Psoas muscle (tissue), 8 donors: ENCODE measurements at regions of chr6 and their contacts with region 1.

Region 1: GRCh38 chr6:45714741-45715507 is 300.7 kb downstream of the CLIC5 start:
- DNase-seq: no peak
- ATAC-seq: peak; percentile 84 to 98 (median 90)
- H3K4me3 ChIP-seq: no peak overlapping the region
- H3K27ac ChIP-seq: no peak overlapping the region
- H3K4me1 ChIP-seq: no peaks in the 10 kb centered on the region
- H3K27me3 ChIP-seq: no peaks in the 10 kb centered on the region
- CTCF ChIP-seq: peak; percentile 76

Region 2: DNA sequence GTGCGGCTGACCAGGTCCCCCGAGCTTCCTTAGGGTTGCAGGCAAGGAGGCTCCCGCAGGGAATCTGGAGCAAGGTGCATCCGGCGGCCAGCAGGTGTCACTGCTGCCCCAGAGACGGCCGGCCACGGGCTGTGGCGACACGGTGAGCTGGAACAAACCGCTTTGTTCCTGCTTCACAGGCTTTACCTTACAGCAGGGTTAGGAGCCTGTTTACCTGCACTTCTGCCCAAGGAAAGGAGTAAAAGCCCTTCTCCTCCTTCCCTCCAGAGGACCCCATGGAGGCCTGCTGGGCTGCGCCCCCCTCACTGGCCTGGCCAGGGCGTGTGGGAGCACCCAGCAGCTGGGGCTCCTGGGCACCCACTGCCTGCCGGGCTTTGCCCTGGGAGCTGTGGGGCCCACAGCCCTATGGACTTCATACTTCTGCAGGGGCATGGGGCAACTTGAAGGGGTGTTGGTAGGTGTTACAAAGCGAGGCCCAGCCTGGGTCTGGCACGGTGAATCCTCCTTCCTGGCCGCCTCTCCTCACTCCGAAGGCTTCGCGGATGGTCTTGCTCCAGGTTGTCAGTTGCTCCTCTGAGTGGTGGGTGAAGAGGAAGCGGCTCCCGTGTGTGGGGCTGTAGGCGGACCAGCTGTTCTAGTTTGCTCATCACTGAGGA is 1239.0 kb before region 1 on chr6:
- intact Hi-C with region 1: loop called (anchors 2 to 5 kb)
- DNase-seq: peak; percentile 80 to 87
- ATAC-seq: peak; percentile 80 to 91 (median 88)
- H3K4me3 ChIP-seq: no peak overlapping the region
- H3K27ac ChIP-seq: no peak overlapping the region
- H3K4me1 ChIP-seq: peaks cover 27% of the 10 kb centered on the region
- H3K27me3 ChIP-seq: no peaks in the 10 kb centered on the region
- CTCF ChIP-seq: peak; percentile 95

Region 3: DNA sequence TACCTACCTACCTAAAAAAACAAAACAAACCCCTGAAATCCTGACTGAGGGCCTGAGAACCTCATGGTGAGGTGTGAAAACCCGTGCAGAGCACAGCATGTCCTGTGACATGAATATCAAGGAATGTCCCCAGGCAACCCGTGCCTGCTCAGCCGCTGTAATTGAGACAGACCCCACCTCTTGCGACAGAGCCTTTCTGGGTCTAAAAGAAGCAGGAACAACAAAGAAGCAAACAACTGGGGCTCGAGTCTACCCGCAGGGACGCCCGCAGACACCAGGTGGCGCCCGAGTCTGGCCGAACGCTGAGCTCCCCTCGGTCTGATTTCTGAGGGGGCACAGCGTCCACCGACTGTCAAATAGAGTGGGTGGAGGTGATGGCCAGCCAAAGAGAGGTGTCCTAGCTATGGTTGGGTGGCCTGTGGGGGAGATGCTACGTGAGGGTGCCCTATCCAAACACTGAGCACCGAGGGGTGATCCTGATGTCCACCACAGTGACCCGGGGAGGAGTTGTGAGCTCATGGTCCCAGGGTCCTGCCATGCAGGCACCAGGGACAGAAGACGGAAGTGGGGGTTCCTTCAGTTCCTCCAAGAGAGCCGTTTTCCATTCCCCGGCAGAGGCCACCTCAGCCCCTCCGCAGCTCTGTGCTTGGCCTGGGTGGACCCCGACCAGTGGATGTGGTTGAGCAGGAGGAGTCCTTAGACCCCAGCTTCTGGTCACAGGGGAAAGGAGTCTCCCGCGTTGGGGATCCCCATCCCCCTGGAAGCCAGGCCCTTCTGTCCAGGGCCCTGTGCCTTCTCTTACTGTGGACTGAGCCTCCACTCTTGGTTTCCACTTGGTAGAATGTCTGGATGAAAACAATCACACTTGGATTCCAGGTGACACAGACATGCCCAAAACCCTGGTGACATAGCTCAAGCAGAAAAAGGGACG is 1059.2 kb before region 1 on chr6:
- intact Hi-C with region 1: loop called (anchors 2 kb)
- DNase-seq: peak; percentile 76 to 90
- ATAC-seq: peak; percentile 59 to 87 (median 74)
- H3K4me3 ChIP-seq: no peak overlapping the region
- H3K27ac ChIP-seq: no peak overlapping the region
- H3K4me1 ChIP-seq: no peaks in the 10 kb centered on the region
- H3K27me3 ChIP-seq: peaks cover 0 to 4% (median 0%) of the 10 kb centered on the region in 3 donors
- CTCF ChIP-seq: peak; percentile 88

Region 4: DNA sequence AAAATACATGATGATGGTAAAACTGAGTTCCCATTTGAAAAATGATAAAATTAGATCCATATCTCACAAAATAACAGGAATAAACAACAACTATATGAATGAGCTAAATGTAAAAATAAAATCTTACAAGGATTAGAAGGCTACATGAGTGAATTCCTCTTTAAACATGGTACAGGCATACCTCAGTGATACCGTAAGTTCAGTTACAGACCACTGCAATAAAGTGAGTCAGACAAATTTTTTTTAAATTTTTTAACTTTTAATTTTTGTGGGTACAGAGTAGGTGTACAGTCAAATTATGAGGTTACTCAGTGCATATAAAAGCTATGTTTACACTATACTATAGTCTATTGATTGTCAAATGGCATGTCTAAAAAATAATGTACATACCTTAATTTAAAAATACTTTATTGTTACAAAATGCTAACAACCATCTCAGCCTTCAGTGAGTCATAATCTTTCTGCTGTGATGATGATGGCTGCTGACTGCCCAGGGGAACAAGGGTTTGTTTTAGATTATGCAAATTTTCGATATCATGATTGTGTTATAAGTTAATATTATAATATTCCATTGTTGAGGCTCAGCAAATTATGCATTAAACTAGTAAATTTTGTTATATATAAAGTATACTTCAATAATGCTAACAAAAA is 609.6 kb before region 1 on chr6:
- intact Hi-C with region 1: no loop called
- DNase-seq: no peak
- ATAC-seq: no peak
- H3K4me3 ChIP-seq: no peak overlapping the region
- H3K27ac ChIP-seq: no peak overlapping the region
- H3K4me1 ChIP-seq: no peaks in the 10 kb centered on the region
- H3K27me3 ChIP-seq: no peaks in the 10 kb centered on the region
- CTCF ChIP-seq: no peak

Region 5: DNA sequence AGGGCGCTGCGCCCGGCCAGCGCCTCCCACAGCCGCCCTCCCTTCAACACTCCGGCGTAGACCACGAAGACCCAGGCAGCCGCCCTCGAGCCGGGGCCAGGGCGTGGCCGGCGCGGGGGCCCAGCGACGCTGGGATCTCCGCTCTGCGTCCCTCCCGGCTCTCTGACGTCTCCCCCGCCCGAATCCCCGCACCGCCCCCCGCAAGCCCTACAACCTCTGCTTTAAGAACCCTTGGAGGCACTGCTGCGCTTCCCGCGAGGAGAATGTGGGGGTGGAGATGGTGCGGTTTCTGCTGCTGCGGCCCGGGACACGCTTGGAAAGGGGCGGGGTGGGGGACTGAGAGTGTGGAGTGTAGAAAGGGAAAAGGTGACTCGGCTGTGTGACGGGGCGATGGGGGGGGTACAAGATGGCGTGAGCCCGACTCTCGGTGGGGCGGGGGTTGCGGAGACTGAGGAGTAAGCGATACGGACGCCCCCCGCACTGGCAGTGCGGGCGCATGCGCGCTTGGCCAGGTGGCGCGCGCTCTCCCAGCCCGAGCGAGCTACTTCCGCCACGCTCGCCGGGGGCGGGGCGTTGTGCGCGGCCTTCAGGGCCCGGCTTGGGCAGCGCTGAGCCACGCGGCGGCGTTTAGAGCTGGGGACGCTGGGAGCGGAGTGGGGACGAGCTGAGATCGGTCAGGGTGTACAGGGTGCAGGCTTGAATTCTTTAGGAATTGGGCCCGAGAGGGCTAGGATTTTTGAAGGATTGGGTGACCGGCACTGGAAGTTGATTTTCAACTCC is 337.2 kb before region 1 on chr6 and contains the start of gene SUPT3H:
- intact Hi-C with region 1: loop called in 1 of 2 experiments (anchors 5 kb)
- DNase-seq: peak; percentile 93 to 95
- ATAC-seq: peak; percentile 97
- H3K4me3 ChIP-seq: peak within 1 kb of the TSS; percentile 84
- H3K27ac ChIP-seq: peak within 1 kb of the TSS; percentile 96
- H3K4me1 ChIP-seq: peaks cover 9% of the 10 kb centered on the region
- H3K27me3 ChIP-seq: no peaks in the 10 kb centered on the region
- CTCF ChIP-seq: peak; percentile 27
- total RNA-seq, gene SUPT3H: 1.9 to 3.3 (median 2.5) TPM

Region 6: DNA sequence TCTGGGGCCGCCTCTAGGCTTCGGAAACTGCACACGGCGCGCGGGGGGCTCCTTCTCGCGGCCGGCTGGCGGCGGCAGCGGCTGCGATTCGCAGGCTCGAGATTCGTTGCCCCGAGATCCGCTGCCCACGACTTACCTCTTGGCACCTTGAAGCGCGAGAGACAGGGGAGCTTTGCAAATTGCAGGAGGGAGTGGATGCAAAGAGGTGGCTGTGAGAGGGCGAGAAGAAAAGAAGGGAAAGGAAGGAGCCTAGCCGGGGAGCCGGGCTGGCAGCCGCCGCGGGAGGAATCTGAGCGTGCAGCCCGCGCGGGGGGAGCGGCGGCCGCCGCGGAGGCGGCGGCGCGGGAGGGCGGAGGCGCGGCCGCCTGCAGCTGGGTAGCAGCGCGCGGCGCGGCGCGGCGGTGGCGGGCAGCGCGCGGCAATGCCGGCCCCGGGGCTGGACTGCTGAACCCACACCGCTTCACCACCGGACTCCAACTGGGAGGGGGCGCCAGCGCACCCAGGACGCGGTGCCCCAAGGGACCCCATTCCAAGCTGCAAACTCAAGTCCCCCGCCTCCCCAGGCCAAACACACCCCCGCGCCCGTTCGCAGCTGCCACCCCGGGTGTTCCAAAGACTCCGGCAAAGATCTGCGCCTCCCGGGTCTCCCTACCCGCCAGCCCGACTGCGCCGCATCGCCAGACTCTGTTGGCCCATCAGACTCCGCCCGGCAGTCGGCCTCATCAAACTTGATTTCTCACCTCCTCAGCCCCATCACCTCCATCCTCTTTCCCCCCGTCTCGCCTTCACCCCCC is 293.0 kb before region 1 on chr6:
- intact Hi-C with region 1: loop called (anchors 2 to 10 kb)
- DNase-seq: peak; percentile 51 to 79
- ATAC-seq: peak; percentile 60 to 80 (median 77)
- H3K4me3 ChIP-seq: peak overlapping the region; percentile 73
- H3K27ac ChIP-seq: no peak overlapping the region
- H3K4me1 ChIP-seq: peaks cover 25% of the 10 kb centered on the region
- H3K27me3 ChIP-seq: peaks cover 0 to 73% (median 17%) of the 10 kb centered on the region in 3 donors
- CTCF ChIP-seq: no peak